Caco-2 (cell line): ENCODE measurements at regions of chr12 and their contacts with region 1.

Region 1: DNA sequence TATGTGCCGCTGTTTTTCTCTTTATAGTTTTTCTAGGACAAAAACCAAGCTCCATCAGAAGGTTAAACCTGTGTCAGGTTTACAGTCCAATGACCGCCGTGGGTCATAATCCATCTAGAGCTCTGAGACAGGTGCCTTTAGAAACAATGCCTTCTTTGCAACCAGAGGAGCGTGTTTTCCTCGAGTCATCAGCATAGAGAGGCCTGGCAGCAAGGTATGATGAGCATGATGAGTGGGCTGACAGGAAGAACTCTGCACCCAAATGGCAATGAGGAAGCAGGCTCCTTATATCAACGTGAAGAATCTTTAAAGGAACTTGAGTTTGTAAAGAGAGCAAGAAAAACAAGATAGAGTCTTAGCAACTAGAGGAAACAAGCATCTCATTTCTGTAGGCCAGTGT is 60.5 kb upstream of the NUDT4 start:
- DNase-seq: peak; percentile 34 to 80
- H3K4me3 ChIP-seq: no peak overlapping the region
- H3K4me3 Mint-ChIP-seq: peak overlapping the region; percentile 17
- H3K27ac Mint-ChIP-seq: peak overlapping the region; percentile 95
- H3K4me1 ChIP-seq: peaks cover 42% of the 10 kb centered on the region
- H3K4me1 Mint-ChIP-seq: peaks cover 31% of the 10 kb centered on the region
- H3K27me3 ChIP-seq: no peaks in the 10 kb centered on the region
- H3K27me3 Mint-ChIP-seq: no peaks in the 10 kb centered on the region
- CTCF ChIP-seq: no peak

Region 2: GRCh38 chr12:93042283-93042682 is 274.9 kb before region 1 on chr12:
- CTCF ChIA-PET with region 1: no interaction called
- POLR2A ChIA-PET with region 1: interaction called, 13 read pairs
- intact Hi-C with region 1: loop called (anchors 5 kb)
- DNase-seq: peak; percentile 72 to 84
- H3K4me3 ChIP-seq: no peak overlapping the region
- H3K4me3 Mint-ChIP-seq: peak overlapping the region; percentile 37
- H3K27ac Mint-ChIP-seq: peak overlapping the region; percentile 87
- H3K4me1 ChIP-seq: peaks cover 46% of the 10 kb centered on the region
- H3K4me1 Mint-ChIP-seq: peaks cover 51% of the 10 kb centered on the region
- H3K27me3 ChIP-seq: no peaks in the 10 kb centered on the region
- H3K27me3 Mint-ChIP-seq: no peaks in the 10 kb centered on the region
- CTCF ChIP-seq: no peak

Region 3: GRCh38 chr12:93127582-93128331 is 189.5 kb before region 1 on chr12:
- CTCF ChIA-PET with region 1: no interaction called
- POLR2A ChIA-PET with region 1: no interaction called
- intact Hi-C with region 1: loop called (anchors 10 kb)
- DNase-seq: peak; percentile 89 to 93
- H3K4me3 ChIP-seq: no peak overlapping the region
- H3K4me3 Mint-ChIP-seq: peak overlapping the region; percentile 37
- H3K27ac Mint-ChIP-seq: peak overlapping the region; percentile 94
- H3K4me1 ChIP-seq: peaks cover 36% of the 10 kb centered on the region
- H3K4me1 Mint-ChIP-seq: peaks cover 43% of the 10 kb centered on the region
- H3K27me3 ChIP-seq: no peaks in the 10 kb centered on the region
- H3K27me3 Mint-ChIP-seq: no peaks in the 10 kb centered on the region
- CTCF ChIP-seq: peak; percentile 57 to 65

Region 4: GRCh38 chr12:93154753-93155480 is 162.3 kb before region 1 on chr12:
- CTCF ChIA-PET with region 1: no interaction called
- POLR2A ChIA-PET with region 1: no interaction called
- intact Hi-C with region 1: loop called (anchors 2 kb)
- DNase-seq: peak; percentile 64 to 68
- H3K4me3 ChIP-seq: no peak overlapping the region
- H3K4me3 Mint-ChIP-seq: peak overlapping the region; percentile 56
- H3K27ac Mint-ChIP-seq: peak overlapping the region; percentile 80
- H3K4me1 ChIP-seq: peaks cover 41% of the 10 kb centered on the region
- H3K4me1 Mint-ChIP-seq: peaks cover 38% of the 10 kb centered on the region
- H3K27me3 ChIP-seq: no peaks in the 10 kb centered on the region
- H3K27me3 Mint-ChIP-seq: no peaks in the 10 kb centered on the region
- CTCF ChIP-seq: no peak

Region 5: GRCh38 chr12:93167841-93168492 is 149.3 kb before region 1 on chr12:
- CTCF ChIA-PET with region 1: no interaction called
- POLR2A ChIA-PET with region 1: no interaction called
- intact Hi-C with region 1: loop called (anchors 2 kb)
- DNase-seq: peak in 1 of 2 experiments; percentile 48
- H3K4me3 ChIP-seq: peak overlapping the region; percentile 28
- H3K4me3 Mint-ChIP-seq: peak overlapping the region; percentile 72
- H3K27ac Mint-ChIP-seq: peak overlapping the region; percentile 85
- H3K4me1 ChIP-seq: peaks cover 44% of the 10 kb centered on the region
- H3K4me1 Mint-ChIP-seq: peaks cover 41% of the 10 kb centered on the region
- H3K27me3 ChIP-seq: no peaks in the 10 kb centered on the region
- H3K27me3 Mint-ChIP-seq: no peaks in the 10 kb centered on the region
- CTCF ChIP-seq: no peak

Region 6: DNA sequence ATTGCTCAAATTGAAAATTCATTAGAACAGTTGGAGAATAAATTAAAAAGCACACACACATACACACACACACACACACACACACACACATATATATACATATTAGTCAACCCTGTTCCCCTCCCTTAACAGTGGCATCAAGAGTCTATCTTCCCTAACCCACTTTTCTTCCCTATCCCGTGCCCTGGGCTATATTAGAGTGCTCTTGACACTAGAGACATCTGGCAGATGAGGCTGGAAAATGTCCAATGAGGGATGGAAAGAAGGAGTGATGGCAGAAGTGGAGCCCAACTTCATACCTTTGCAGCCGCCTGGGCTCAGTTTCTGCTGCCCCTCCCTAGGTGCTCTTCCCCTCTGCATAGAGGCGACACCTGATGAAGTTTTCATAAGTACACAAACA is 111.9 kb before region 1 on chr12:
- CTCF ChIA-PET with region 1: no interaction called
- POLR2A ChIA-PET with region 1: no interaction called
- intact Hi-C with region 1: no loop called
- DNase-seq: no peak
- H3K4me3 ChIP-seq: no peak overlapping the region
- H3K4me3 Mint-ChIP-seq: no peak overlapping the region
- H3K27ac Mint-ChIP-seq: no peak overlapping the region
- H3K4me1 ChIP-seq: peaks cover 2% of the 10 kb centered on the region
- H3K4me1 Mint-ChIP-seq: peaks cover 14% of the 10 kb centered on the region
- H3K27me3 ChIP-seq: no peaks in the 10 kb centered on the region
- H3K27me3 Mint-ChIP-seq: no peaks in the 10 kb centered on the region
- CTCF ChIP-seq: no peak

Region 7: DNA sequence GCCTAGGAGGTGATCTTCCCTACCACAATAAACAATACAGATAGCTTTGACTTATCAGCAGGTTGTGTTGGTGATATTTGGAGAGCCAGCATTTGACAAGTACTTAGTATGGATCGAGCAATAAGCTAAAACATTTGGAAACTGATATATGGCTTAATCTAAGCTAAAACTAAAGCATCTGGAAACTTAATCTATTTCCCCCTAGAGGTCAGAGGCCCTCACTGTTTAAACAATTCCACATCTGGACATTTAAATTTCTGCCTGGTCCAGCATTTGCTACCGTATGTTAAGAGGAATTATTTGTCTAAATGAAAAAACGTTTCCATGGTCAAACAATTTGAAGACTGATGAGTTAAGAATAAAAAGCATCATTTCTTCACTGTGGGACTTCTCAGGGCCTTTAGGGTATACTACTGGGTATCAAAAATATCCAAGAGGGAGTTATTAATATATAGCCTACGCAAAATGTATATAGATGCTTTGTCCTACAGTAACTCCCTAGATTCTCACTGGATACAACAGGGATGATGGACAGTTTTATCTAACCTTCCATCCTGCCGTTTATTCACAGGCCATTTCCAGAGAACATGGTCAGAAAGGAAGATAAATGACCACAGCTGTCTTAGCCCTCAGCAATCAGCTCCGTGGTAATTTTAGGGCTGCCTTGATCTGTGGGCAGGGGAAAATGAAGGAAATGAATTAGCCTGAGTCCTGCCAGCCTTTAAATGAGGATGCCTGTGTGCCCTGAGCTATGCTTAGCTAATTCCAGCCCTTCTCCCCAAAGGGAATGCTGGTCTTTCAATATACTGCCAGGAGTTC is 74.9 kb before region 1 on chr12:
- CTCF ChIA-PET with region 1: no interaction called
- POLR2A ChIA-PET with region 1: interaction called, 11 read pairs
- intact Hi-C with region 1: no loop called
- DNase-seq: no peak
- H3K4me3 ChIP-seq: no peak overlapping the region
- H3K4me3 Mint-ChIP-seq: no peak overlapping the region
- H3K27ac Mint-ChIP-seq: no peak overlapping the region
- H3K4me1 ChIP-seq: peaks cover 13% of the 10 kb centered on the region
- H3K4me1 Mint-ChIP-seq: peaks cover 13% of the 10 kb centered on the region
- H3K27me3 ChIP-seq: no peaks in the 10 kb centered on the region
- H3K27me3 Mint-ChIP-seq: no peaks in the 10 kb centered on the region
- CTCF ChIP-seq: no peak

Region 8: GRCh38 chr12:93292741-93293566 is 24.3 kb before region 1 on chr12:
- CTCF ChIA-PET with region 1: no interaction called
- POLR2A ChIA-PET with region 1: no interaction called
- intact Hi-C with region 1: loop called (anchors 2 kb)
- DNase-seq: peak; percentile 65 to 69
- H3K4me3 ChIP-seq: no peak overlapping the region
- H3K4me3 Mint-ChIP-seq: no peak overlapping the region
- H3K27ac Mint-ChIP-seq: peak overlapping the region; percentile 12
- H3K4me1 ChIP-seq: peaks cover 15% of the 10 kb centered on the region
- H3K4me1 Mint-ChIP-seq: peaks cover 14% of the 10 kb centered on the region
- H3K27me3 ChIP-seq: no peaks in the 10 kb centered on the region
- H3K27me3 Mint-ChIP-seq: no peaks in the 10 kb centered on the region
- CTCF ChIP-seq: no peak